Heart right ventricle (tissue), 16 donors: ENCODE measurements at regions of chr12 and their contacts with region 1.

Region 1: GRCh38 chr12:124428130-124428791 is 133.4 kb downstream of the RFLNA start:
- DNase-seq: peak in 1 of 2 donors; percentile 48
- ATAC-seq: peak in 2 of 8 donors; percentile 6 to 16
- H3K4me3 ChIP-seq: no peak overlapping the region
- H3K27ac ChIP-seq: peak overlapping the region in 9 of 10 donors; percentile 24 to 79 (median 61)
- H3K4me1 ChIP-seq: peaks cover 36 to 73% (median 59%) of the 10 kb centered on the region in 9 donors
- H3K27me3 ChIP-seq: no peaks in the 10 kb centered on the region
- CTCF ChIP-seq: no peak

Region 2: GRCh38 chr12:123675436-123675835 is 752.8 kb before region 1 on chr12:
- intact Hi-C with region 1: loop called in 1 of 10 experiments (anchors 5 kb)
- DNase-seq: no peak
- ATAC-seq: no peak
- H3K4me3 ChIP-seq: no peak overlapping the region
- H3K27ac ChIP-seq: no peak overlapping the region
- H3K4me1 ChIP-seq: peaks cover 0 to 12% (median 11%) of the 10 kb centered on the region in 9 donors
- H3K27me3 ChIP-seq: no peaks in the 10 kb centered on the region
- CTCF ChIP-seq: no peak

Region 3: GRCh38 chr12:124411281-124411878 is 16.9 kb before region 1 on chr12:
- intact Hi-C with region 1: no loop called
- DNase-seq: no peak
- ATAC-seq: peak; percentile 23 to 77 (median 43)
- H3K4me3 ChIP-seq: no peak overlapping the region
- H3K27ac ChIP-seq: peak overlapping the region in 9 of 10 donors; percentile 43 to 77 (median 64)
- H3K4me1 ChIP-seq: peaks cover 36 to 70% (median 48%) of the 10 kb centered on the region in 9 donors
- H3K27me3 ChIP-seq: no peaks in the 10 kb centered on the region
- CTCF ChIP-seq: no peak

Region 4: GRCh38 chr12:124480469-124481256 is 52.4 kb after region 1 on chr12:
- intact Hi-C with region 1: no loop called
- DNase-seq: peak in 1 of 2 donors; percentile 64
- ATAC-seq: peak in 7 of 8 donors; percentile 18 to 41 (median 23)
- H3K4me3 ChIP-seq: no peak overlapping the region
- H3K27ac ChIP-seq: peak overlapping the region in 8 of 10 donors; percentile 14 to 80 (median 47)
- H3K4me1 ChIP-seq: peaks cover 5 to 44% (median 21%) of the 10 kb centered on the region in 9 donors
- H3K27me3 ChIP-seq: no peaks in the 10 kb centered on the region
- CTCF ChIP-seq: peak in 1 of 9 donors; percentile 6